ENCODE measurements at regions of chr15 and their contacts with region 1.

Region 1: GRCh38 chr15:68795298-68795848 is 25.3 kb downstream of the ANP32A start:
- DNase-seq: no peak
- ATAC-seq: peak; percentile 62
- H3K4me3 ChIP-seq: peak overlapping the region; percentile 60
- H3K27ac ChIP-seq: peak overlapping the region; percentile 72
- H3K4me1 ChIP-seq: peaks cover 83% of the 10 kb centered on the region
- H3K27me3 ChIP-seq: no peaks in the 10 kb centered on the region
- CTCF ChIP-seq: no peak
- EP300 ChIP-seq: no peak
- POLR2A ChIP-seq: peak; percentile 77
- RAD21 ChIP-seq: no peak

Region 2: DNA sequence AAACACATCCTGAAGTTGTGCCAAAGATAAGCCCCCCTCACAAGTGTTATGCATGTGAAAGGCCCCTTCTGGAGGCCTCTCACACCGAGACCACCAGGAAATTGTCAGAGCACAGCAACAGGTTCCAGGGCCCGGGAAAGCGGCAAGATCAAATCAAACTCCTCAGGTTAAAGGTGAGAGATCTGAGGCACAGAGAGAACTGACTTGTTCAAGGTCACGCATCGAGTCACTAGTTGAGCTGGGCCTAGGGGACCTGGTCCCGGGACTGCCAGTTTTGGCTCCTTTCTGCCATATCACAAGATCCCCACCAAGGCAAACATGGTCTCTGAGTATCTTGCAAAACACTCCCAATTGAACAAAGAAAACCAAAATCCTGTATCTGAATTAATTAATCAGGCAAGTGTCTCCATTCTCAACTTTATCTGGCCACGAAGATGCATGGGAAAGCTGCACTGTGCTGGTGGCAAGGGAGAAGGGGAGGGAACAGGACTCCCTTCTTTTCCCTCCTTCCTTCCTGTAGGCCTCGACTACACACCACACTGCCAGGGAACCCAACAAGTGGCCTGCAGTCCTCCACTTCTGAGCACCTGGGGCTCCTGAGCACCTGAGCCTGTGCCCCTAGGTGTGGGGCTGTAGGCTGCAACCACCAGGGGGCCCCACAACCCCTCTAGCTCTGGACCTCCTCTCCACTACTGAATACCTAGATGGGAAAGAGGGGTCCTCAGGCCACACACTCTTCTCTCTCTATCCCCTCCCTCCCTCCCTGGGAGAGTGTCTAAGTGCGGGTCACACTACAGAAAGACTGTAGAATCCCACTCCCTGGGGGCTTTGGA is 11.9 kb before region 1 on chr15:
- CTCF ChIA-PET with region 1: interaction called, 24 read pairs
- POLR2A ChIA-PET with region 1: interaction called, 3 read pairs
- RAD21 ChIA-PET with region 1: interaction called, 11 read pairs
- SMC1A ChIA-PET with region 1: interaction called, 8 read pairs
- in situ Hi-C with region 1: no loop called
- intact Hi-C with region 1: no loop called
- DNase-seq: no peak
- ATAC-seq: peak; percentile 99
- H3K4me3 ChIP-seq: no peak overlapping the region
- H3K27ac ChIP-seq: no peak overlapping the region
- H3K4me1 ChIP-seq: peaks cover 9% of the 10 kb centered on the region
- H3K27me3 ChIP-seq: no peaks in the 10 kb centered on the region
- CTCF ChIP-seq: peak; percentile 69 to 83 (median 74)
- EP300 ChIP-seq: no peak
- POLR2A ChIP-seq: peak; percentile 30; the same call in 1 of the 2 replicates
- RAD21 ChIP-seq: peak; percentile 79

Region 3: GRCh38 chr15:68806220-68807060 is 11.1 kb after region 1 on chr15:
- CTCF ChIA-PET with region 1: interaction called, 10 read pairs
- POLR2A ChIA-PET with region 1: interaction called, 7 read pairs
- RAD21 ChIA-PET with region 1: interaction called, 3 read pairs
- SMC1A ChIA-PET with region 1: interaction called, 5 read pairs
- in situ Hi-C with region 1: no loop called
- intact Hi-C with region 1: no loop called
- DNase-seq: no peak
- ATAC-seq: no peak
- H3K4me3 ChIP-seq: no peak overlapping the region
- H3K27ac ChIP-seq: no peak overlapping the region
- H3K4me1 ChIP-seq: peaks cover 16% of the 10 kb centered on the region
- H3K27me3 ChIP-seq: no peaks in the 10 kb centered on the region
- CTCF ChIP-seq: no peak
- EP300 ChIP-seq: no peak
- POLR2A ChIP-seq: no peak
- RAD21 ChIP-seq: no peak

Region 4: GRCh38 chr15:68820295-68821189 is 25.2 kb after region 1 on chr15 and contains the start of gene ANP32A:
- CTCF ChIA-PET with region 1: interaction called, 20 read pairs
- POLR2A ChIA-PET with region 1: interaction called, 77 read pairs
- RAD21 ChIA-PET with region 1: interaction called, 56 read pairs
- SMC1A ChIA-PET with region 1: interaction called, 67 read pairs
- in situ Hi-C with region 1: no loop called
- intact Hi-C with region 1: loop called (anchors 1 kb)
- DNase-seq: peak; percentile 62
- ATAC-seq: peak; percentile 74
- H3K4me3 ChIP-seq: peak within 1 kb of the TSS; percentile 98
- H3K27ac ChIP-seq: peak within 1 kb of the TSS; percentile 99
- H3K4me1 ChIP-seq: peaks cover 21% of the 10 kb centered on the region
- H3K27me3 ChIP-seq: no peaks in the 10 kb centered on the region
- CTCF ChIP-seq: no peak
- EP300 ChIP-seq: no peak
- POLR2A ChIP-seq: peak; percentile 89
- RAD21 ChIP-seq: no peak
- polyA plus RNA-seq, gene ANP32A: 29.6 to 35.3 TPM

Region 5: GRCh38 chr15:68829068-68829467 is 33.7 kb after region 1 on chr15:
- CTCF ChIA-PET with region 1: interaction called, 15 read pairs
- POLR2A ChIA-PET with region 1: interaction called, 4 read pairs
- RAD21 ChIA-PET with region 1: interaction called, 6 read pairs
- SMC1A ChIA-PET with region 1: interaction called, 15 read pairs
- in situ Hi-C with region 1: no loop called
- intact Hi-C with region 1: no loop called
- DNase-seq: no peak
- ATAC-seq: peak; percentile 97
- H3K4me3 ChIP-seq: no peak overlapping the region
- H3K27ac ChIP-seq: no peak overlapping the region
- H3K4me1 ChIP-seq: no peaks in the 10 kb centered on the region; the same call in 1 of the 2 replicates
- H3K27me3 ChIP-seq: no peaks in the 10 kb centered on the region
- CTCF ChIP-seq: peak; percentile 64 to 78 (median 72); a peak in 5 of 6 replicates
- EP300 ChIP-seq: no peak
- POLR2A ChIP-seq: no peak
- RAD21 ChIP-seq: peak; percentile 77

Region 6: GRCh38 chr15:69760890-69761568 is 965.7 kb after region 1 on chr15:
- CTCF ChIA-PET with region 1: no interaction called
- POLR2A ChIA-PET with region 1: no interaction called
- RAD21 ChIA-PET with region 1: no interaction called
- SMC1A ChIA-PET with region 1: no interaction called
- in situ Hi-C with region 1: no loop called
- intact Hi-C with region 1: no loop called
- DNase-seq: peak; percentile 62
- ATAC-seq: peak; percentile 87
- H3K4me3 ChIP-seq: no peak overlapping the region
- H3K27ac ChIP-seq: no peak overlapping the region
- H3K4me1 ChIP-seq: peaks cover 29% of the 10 kb centered on the region
- H3K27me3 ChIP-seq: peaks cover 0 to 3% of the 10 kb centered on the region in 2 experiments; a peak in 1 of 4 replicates
- CTCF ChIP-seq: no peak
- EP300 ChIP-seq: peak; percentile 40 to 65; a peak in 2 of 4 replicates
- POLR2A ChIP-seq: no peak
- RAD21 ChIP-seq: no peak

Measured in GM12878 (cell line).